Stomach (tissue), 19 donors: ENCODE measurements at regions of chr7 and their contacts with region 1.

Region 1: DNA sequence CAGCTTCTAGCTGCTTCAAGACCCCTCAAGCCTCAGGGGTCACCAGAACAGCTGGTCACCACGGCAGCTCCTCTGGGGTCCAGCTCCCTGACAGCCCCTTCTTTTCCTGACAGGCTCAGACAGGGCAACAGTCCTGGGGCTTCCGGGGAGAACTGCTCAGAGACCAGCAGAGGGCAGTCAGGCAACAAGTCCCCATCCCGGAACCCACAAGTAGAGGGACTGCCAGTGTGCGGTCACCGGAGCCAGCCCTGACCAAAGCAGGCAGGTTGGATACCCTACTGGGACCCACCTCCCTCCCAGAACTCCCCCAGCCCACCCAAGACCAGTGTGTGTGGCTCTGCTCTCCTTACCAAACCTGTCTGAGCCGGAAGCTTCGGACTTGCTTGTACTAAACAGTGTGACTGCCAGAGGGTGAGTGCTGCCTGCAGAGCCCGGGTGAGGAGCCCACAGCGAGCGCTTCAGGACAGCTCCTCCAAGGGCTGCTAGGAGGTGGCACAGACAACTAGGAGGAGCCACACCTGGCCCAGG is 40.3 kb downstream of the YKT6 start:
- DNase-seq: peak; percentile 75 to 91
- H3K4me3 ChIP-seq: peak overlapping the region in 2 of 4 donors; percentile 24 to 26
- H3K27ac ChIP-seq: no peak overlapping the region
- H3K4me1 ChIP-seq: peaks cover 0 to 7% (median 4%) of the 10 kb centered on the region in 4 donors
- H3K27me3 ChIP-seq: peaks cover 0 to 19% (median 5%) of the 10 kb centered on the region in 3 donors
- CTCF ChIP-seq: peak in 5 of 7 experiments; percentile 42 to 69 (median 63)
- EP300 ChIP-seq: no peak
- POLR2A ChIP-seq: no peak

Region 2: DNA sequence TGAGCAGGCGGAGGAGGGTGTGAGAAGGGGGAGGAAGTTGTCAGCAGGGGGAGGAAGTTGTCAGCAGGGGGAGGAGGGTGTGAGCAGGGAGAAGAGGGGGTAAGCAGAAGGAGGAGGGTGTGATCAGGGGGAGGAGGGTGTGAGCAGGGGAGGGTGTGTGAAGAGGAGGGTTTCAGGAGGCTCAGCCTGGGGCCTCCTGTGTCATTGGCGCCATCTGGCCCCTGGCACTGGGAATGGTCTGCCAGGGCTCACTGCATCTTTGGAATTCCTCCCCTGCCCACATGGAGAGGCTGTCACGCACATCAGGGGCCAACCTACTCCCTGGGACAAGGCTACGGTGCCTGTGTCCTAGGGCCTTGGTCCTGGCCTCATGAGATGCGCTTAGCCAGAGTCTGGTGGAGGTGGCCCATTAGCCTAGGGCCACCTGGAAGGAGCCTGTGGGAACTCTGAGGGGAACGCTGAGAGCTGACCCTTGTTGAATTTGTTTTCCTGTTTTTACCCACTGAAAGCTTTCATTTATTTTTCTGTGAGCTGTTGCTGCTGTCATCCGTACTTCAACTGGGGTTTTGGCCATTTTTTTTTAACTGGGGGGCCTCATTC is 66.4 kb after region 1 on chr7:
- intact Hi-C with region 1: loop called (anchors 10 kb)
- DNase-seq: peak; percentile 25 to 53
- H3K4me3 ChIP-seq: no peak overlapping the region
- H3K27ac ChIP-seq: no peak overlapping the region
- H3K4me1 ChIP-seq: peaks cover 0 to 12% (median 10%) of the 10 kb centered on the region in 4 donors
- H3K27me3 ChIP-seq: peaks cover 0 to 36% (median 14%) of the 10 kb centered on the region in 3 donors
- CTCF ChIP-seq: peak in 1 of 7 experiments; percentile 25
- EP300 ChIP-seq: no peak
- POLR2A ChIP-seq: no peak

Region 3: DNA sequence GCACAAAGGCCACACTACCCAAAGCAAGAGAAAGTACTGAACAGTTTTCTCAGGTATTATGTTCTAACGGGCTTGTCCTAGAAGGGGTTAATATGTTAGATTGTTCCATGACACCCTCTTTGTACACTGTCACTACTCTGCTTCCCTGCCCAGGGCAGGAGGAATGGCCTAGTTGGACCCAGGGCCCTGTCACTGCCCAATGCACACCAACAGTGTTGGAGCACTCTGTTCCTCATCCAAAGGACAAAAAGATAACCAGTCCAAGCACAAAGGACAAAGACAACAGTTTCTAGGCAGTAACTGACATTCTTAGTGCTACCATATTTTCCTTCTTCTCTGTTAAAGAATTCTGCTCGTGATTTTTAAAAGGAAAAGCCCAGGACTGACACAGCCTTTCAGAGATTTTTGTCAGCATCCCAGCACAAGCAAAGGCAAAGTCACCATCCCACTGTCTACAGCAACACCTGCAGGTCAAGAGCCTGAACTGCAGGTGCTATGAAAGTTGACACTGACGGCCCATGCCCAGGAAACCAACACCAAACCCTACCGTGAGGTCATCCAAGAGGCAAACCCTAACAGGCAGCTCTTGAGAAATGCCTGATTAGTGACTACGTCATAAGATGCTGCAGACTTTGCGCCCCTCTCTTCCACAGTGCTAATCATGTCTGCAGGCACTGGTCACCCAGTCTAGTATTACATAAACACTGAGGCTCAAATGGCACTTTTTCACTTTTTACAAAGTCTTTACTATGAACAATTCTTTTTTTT is 236.2 kb after region 1 on chr7:
- intact Hi-C with region 1: loop called (anchors 10 kb)
- DNase-seq: peak; percentile 59 to 85
- H3K4me3 ChIP-seq: no peak overlapping the region
- H3K27ac ChIP-seq: no peak overlapping the region
- H3K4me1 ChIP-seq: peaks cover 0 to 40% (median 13%) of the 10 kb centered on the region in 4 donors
- H3K27me3 ChIP-seq: no peaks in the 10 kb centered on the region
- CTCF ChIP-seq: peak in 5 of 7 experiments; percentile 87 to 93 (median 89)
- EP300 ChIP-seq: no peak
- POLR2A ChIP-seq: no peak

Region 4: GRCh38 chr7:44565097-44565794 is 324.2 kb after region 1 on chr7:
- intact Hi-C with region 1: loop called (anchors 10 kb)
- DNase-seq: peak; percentile 73 to 88
- H3K4me3 ChIP-seq: no peak overlapping the region
- H3K27ac ChIP-seq: peak overlapping the region in 2 of 5 donors; percentile 7 to 28
- H3K4me1 ChIP-seq: peaks cover 0 to 18% (median 4%) of the 10 kb centered on the region in 4 donors
- H3K27me3 ChIP-seq: no peaks in the 10 kb centered on the region
- CTCF ChIP-seq: peak in 5 of 7 experiments; percentile 89 to 98 (median 97)
- EP300 ChIP-seq: no peak
- POLR2A ChIP-seq: no peak